Activated CD4-positive, alpha-beta T cell treated with anti-CD3 and anti-CD28 coated beads, Interleukin-2, amount 10 ng/mL, durations not matched to agents 24 days and 14 days (primary cell): ENCODE measurements at regions of chr5 and their contacts with region 1.

Region 1: GRCh38 chr5:76790632-76791290 is 28.1 kb upstream of the F2RL1 start:
- DNase-seq: peak; percentile 72
- H3K4me3 Mint-ChIP-seq: no peak overlapping the region
- H3K27ac Mint-ChIP-seq: peak overlapping the region; percentile 66
- H3K4me1 Mint-ChIP-seq: peaks cover 18% of the 10 kb centered on the region
- H3K27me3 Mint-ChIP-seq: no peaks in the 10 kb centered on the region

Region 2: DNA sequence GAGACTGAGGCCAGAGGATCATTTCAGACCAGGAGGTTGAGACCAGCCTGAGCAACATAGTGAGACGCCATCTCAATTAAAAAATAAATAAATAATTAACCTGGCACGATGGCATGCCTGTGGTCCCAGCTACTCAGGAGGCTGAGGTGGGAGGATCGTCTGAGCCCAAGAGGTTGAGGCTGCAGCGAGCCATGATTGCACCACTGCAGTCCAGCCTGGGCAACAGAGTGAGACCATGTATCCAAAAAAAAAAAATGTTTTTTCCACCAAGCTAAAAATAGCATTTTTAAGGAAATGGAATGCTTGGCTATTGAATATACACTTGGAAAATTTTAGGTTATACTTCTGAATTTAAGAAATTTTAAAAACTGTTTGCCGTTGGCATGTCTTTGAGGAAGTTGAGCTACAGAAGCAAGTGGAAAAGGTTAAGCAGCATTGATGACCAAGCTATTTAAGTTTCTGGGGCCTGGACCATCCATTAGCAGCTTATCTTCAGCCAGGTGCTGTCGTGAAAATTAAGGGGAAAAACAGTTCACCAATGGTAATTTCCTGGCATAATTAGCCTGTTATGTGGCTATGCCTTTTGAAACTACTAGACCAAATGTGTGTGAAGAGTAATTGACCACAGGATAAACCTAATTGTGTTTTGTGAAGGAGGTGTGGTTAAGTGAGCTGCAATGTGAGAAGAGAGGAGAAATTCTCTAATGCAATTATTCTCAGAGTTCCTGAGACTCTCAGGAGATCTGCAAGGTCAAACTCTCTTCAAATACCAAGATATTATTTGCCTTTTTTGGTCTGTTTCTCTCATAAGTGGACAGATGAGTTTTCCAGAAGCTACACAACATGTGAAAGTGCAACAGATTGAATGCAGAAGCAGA is 53.8 kb before region 1 on chr5:
- intact Hi-C with region 1: loop called (anchors 1 kb)
- DNase-seq: no peak
- H3K4me3 Mint-ChIP-seq: peak overlapping the region; percentile 17
- H3K27ac Mint-ChIP-seq: peak overlapping the region; percentile 46
- H3K4me1 Mint-ChIP-seq: peaks cover 29% of the 10 kb centered on the region
- H3K27me3 Mint-ChIP-seq: no peaks in the 10 kb centered on the region